ENCODE measurements at regions of chr15 and their contacts with region 1.

Region 1: GRCh38 chr15:66497502-66498455 is at the start of gene SNAPC5:
- DNase-seq: peak; percentile 95 to 99
- ATAC-seq: peak; percentile 96
- total RNA-seq, gene SNAPC5: 17.6 to 19.2 TPM

Region 2: GRCh38 chr15:66364934-66365528 is 132.7 kb before region 1 on chr15:
- intact Hi-C with region 1: no loop called
- DNase-seq: no peak
- ATAC-seq: no peak

Region 3: GRCh38 chr15:66386204-66387123 is 111.3 kb before region 1 on chr15 and contains the start of gene MAP2K1:
- intact Hi-C with region 1: loop called in 1 of 2 experiments (anchors 5 kb)
- DNase-seq: peak; percentile 99
- ATAC-seq: peak; percentile 94
- total RNA-seq, gene MAP2K1: 44.7 to 45.9 TPM

Measured in left colon (tissue), 2 donors.